ENCODE measurements at regions of chr9 and their contacts with region 1.

Region 1: GRCh38 chr9:96327694-96328352 is 25.8 kb upstream of the HSD17B3 start:
- DNase-seq: peak; percentile 55
- H3K4me3 ChIP-seq: no peak overlapping the region
- H3K27ac ChIP-seq: no peak overlapping the region
- H3K4me1 ChIP-seq: no peaks in the 10 kb centered on the region
- CTCF ChIP-seq: peak; percentile 90

Region 2: DNA sequence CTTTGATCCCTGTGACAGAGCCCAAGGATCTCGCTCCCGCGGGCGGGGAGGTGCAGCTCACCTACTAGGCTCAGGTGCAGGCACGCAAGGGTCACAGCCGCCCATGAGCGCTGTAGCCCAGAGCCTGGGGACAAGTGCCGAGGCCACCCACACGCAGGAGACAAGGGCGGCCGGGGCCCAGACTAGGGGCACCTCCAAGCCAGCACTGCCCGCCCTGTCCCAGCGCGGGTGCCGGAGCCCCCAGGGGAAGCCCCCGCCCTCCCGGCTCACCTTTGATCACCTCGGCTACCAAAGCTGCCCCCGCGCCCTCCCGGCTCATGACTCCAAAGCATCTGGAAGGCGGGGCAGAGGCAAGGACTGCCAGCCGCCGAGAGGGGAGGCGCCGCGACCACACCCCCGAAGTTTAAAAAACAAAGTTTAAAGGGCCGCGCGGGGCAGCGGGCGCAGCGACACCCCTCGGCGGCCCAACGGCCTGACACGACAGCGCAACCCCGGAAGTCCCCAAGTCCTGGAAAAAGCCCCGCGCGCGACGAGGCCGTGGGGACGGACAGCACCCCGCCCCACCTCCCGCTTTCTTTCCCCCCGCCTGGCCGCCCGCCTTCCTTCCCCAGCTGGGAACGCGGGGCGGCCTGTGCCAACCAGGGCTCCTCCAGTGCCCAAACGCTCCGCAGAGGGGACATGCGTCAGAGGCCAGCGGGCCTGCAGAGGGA is 238.8 kb after region 1 on chr9:
- CTCF ChIA-PET with region 1: no interaction called
- POLR2A ChIA-PET with region 1: interaction called, 4 read pairs
- intact Hi-C with region 1: loop called (anchors 5 kb)
- DNase-seq: peak; percentile 74
- H3K4me3 ChIP-seq: peak overlapping the region; percentile 66
- H3K27ac ChIP-seq: no peak overlapping the region
- H3K4me1 ChIP-seq: peaks cover 5% of the 10 kb centered on the region
- CTCF ChIP-seq: peak; percentile 76

Region 3: GRCh38 chr9:96654443-96655197 is 326.8 kb after region 1 on chr9:
- CTCF ChIA-PET with region 1: no interaction called
- POLR2A ChIA-PET with region 1: no interaction called
- intact Hi-C with region 1: loop called (anchors 5 kb)
- DNase-seq: no peak
- H3K4me3 ChIP-seq: no peak overlapping the region
- H3K27ac ChIP-seq: no peak overlapping the region
- H3K4me1 ChIP-seq: peaks cover 3% of the 10 kb centered on the region
- CTCF ChIP-seq: no peak

Region 4: DNA sequence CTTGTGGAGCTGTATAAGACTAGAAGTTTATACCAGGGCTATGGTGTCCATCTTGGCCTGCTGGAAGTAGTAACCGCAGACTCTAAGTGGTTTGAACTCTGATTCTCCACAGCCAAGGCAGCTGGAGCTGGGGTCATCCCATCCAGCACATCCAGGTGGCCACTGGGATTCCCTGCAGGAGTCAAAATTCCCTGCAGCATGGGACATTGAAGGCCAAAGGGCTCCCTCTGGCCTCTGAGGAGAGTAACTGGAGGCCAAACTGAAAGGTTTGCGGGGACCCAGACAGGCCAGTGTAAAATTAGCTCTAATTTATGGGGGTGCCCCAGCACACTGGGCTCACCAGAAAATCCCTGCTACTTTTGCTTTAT is 339.5 kb after region 1 on chr9:
- CTCF ChIA-PET with region 1: no interaction called
- POLR2A ChIA-PET with region 1: no interaction called
- intact Hi-C with region 1: loop called (anchors 5 kb)
- DNase-seq: no peak
- H3K4me3 ChIP-seq: no peak overlapping the region
- H3K27ac ChIP-seq: no peak overlapping the region
- H3K4me1 ChIP-seq: no peaks in the 10 kb centered on the region
- CTCF ChIP-seq: no peak